Activated T-helper 1 cell treated with anti-CD3 and anti-CD28 coated beads, Interleukin-12 subunit alpha, Interleukin-12 subunit beta, Interleukin-2, Interleukin-4 antibody, amounts not matched to agents 30 ng/mL and 10 ng/mL and 1 ng/mL, durations not matched to agents 14 hours and 24 hours and 36 hours (primary cell): ENCODE measurements at regions of chr1 and their contacts with region 1.

Region 1: GRCh38 chr1:203769505-203770343 is 4.7 kb downstream of the LAX1 start:
- DNase-seq: no peak
- H3K4me3 Mint-ChIP-seq: no peak overlapping the region
- H3K27ac Mint-ChIP-seq: no peak overlapping the region
- H3K4me1 Mint-ChIP-seq: peaks cover 27% of the 10 kb centered on the region
- H3K27me3 Mint-ChIP-seq: no peaks in the 10 kb centered on the region

Region 2: GRCh38 chr1:203368624-203369451 is 400.9 kb before region 1 on chr1:
- intact Hi-C with region 1: no loop called
- DNase-seq: no peak
- H3K4me3 Mint-ChIP-seq: no peak overlapping the region
- H3K27ac Mint-ChIP-seq: no peak overlapping the region
- H3K4me1 Mint-ChIP-seq: no peaks in the 10 kb centered on the region
- H3K27me3 Mint-ChIP-seq: peaks cover 11% of the 10 kb centered on the region

Region 3: DNA sequence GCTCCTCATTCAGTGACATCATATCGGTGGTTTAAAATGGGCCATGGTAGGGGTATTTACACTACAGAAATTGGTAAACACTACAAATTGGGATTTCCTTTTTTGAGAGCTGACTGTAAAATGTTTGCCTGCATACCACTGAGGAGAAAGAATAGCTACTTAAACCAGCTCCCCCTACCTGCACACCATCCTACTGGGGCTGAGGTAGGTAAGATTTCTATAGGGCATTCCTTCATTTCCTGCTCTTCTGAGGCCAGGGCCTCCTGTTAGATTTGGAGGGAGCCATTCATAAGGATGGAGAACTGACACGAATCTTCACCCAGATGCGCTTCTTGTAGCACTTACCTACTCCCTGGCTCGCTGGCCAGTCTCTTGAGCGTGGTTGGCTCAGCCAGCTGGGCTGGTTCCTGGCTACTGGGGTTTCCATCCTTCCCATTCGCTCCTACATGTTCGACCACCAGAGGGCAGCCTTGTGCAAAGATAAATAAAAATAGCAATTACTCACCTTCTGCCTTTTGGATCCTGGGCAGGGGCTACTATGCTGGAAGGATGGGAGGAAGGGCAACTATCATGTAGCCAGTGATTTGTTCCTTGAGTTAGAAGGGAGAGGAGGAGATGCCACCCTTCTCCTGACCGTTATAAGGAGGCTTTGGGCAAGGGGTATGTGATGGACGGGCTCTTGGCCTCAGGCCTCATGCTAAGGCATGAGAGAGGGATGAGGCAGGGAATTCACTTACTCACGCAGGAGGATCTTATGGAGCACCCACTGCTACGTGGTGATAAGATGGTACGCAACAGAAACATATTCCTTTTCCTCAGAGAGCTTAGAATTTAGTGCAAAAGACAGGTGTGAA is 265.1 kb before region 1 on chr1:
- intact Hi-C with region 1: loop called (anchors 2 kb)
- DNase-seq: peak; percentile 59
- H3K4me3 Mint-ChIP-seq: no peak overlapping the region
- H3K27ac Mint-ChIP-seq: no peak overlapping the region
- H3K4me1 Mint-ChIP-seq: peaks cover 8% of the 10 kb centered on the region
- H3K27me3 Mint-ChIP-seq: peaks cover 9% of the 10 kb centered on the region

Region 4: DNA sequence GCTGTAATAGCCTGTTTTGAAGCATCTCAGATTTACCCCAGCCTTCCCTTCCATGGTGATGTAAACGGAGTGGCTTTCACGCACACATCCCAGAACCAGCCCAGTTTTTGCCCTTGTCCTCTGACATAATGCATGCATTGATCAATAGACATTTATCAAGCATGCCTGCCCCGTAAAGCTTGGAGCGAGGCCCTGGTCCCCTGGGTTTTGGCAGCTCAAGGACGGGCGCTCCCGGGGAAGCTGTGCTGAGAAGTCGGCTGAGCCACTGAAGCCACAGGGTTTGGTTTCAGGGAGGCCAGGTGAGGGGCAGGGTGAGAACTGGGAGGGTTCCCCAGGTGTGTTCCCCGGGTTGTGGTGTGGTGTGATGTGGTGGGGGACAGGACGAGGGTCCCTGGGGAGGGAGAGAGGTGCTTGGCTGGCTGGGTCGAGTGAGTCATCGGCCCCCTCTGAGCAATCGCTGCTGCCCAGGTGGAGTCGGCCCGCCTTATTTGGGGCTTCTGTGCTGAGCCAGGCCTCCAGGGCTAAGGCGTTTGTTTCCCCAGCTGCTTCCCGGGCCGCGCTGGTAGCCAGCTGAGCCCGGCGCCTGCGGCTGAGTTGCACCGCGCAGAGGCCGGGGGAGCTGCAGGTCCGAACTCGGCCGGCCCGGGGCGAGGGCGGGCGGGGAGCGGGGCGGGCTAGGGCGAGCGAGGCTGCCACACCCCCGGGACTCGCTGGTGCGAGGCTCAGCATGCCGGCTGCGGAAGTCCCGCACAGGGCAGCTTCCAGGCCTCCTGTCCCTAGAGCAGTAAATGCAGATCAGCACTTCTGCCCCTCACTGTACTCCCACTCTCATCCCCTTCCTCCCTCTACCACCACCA is 119.5 kb before region 1 on chr1:
- intact Hi-C with region 1: loop called (anchors 1 kb)
- DNase-seq: peak; percentile 56
- H3K4me3 Mint-ChIP-seq: peak overlapping the region; percentile 77
- H3K27ac Mint-ChIP-seq: peak overlapping the region; percentile 98
- H3K4me1 Mint-ChIP-seq: peaks cover 78% of the 10 kb centered on the region
- H3K27me3 Mint-ChIP-seq: no peaks in the 10 kb centered on the region

Region 5: GRCh38 chr1:203744075-203744972 is 25.4 kb before region 1 on chr1:
- intact Hi-C with region 1: loop called (anchors 1 kb)
- DNase-seq: peak; percentile 32
- H3K4me3 Mint-ChIP-seq: peak overlapping the region; percentile 32
- H3K27ac Mint-ChIP-seq: peak overlapping the region; percentile 92
- H3K4me1 Mint-ChIP-seq: peaks cover 25% of the 10 kb centered on the region
- H3K27me3 Mint-ChIP-seq: no peaks in the 10 kb centered on the region

Region 6: GRCh38 chr1:203795441-203796235 is 25.9 kb after region 1 on chr1 and contains the starts of genes ZBED6 and ZC3H11A:
- intact Hi-C with region 1: loop called (anchors 1 kb)
- DNase-seq: peak; percentile 99
- H3K4me3 Mint-ChIP-seq: peak within 1 kb of the TSS; percentile 96
- H3K27ac Mint-ChIP-seq: peak within 1 kb of the TSS; percentile 98
- H3K4me1 Mint-ChIP-seq: peaks cover 42% of the 10 kb centered on the region
- H3K27me3 Mint-ChIP-seq: no peaks in the 10 kb centered on the region
- total RNA-seq, gene ZBED6: 19.8 and 21.3 TPM in 2 replicates
- total RNA-seq, gene ZC3H11A: 85.0 and 85.5 TPM in 2 replicates

Region 7: GRCh38 chr1:203871107-203871875 is 101.6 kb after region 1 on chr1:
- intact Hi-C with region 1: no loop called
- DNase-seq: no peak
- H3K4me3 Mint-ChIP-seq: no peak overlapping the region
- H3K27ac Mint-ChIP-seq: no peak overlapping the region
- H3K4me1 Mint-ChIP-seq: no peaks in the 10 kb centered on the region
- H3K27me3 Mint-ChIP-seq: no peaks in the 10 kb centered on the region